ENCODE measurements at regions of chr1 and their contacts with region 1.

Region 1: GRCh38 chr1:156226116-156226538 is 13.3 kb downstream of the PMF1 start:
- DNase-seq: peak; percentile 61
- H3K4me3 Mint-ChIP-seq: no peak overlapping the region
- H3K27ac Mint-ChIP-seq: peak overlapping the region; percentile 91
- H3K4me1 Mint-ChIP-seq: peaks cover 54% of the 10 kb centered on the region
- H3K27me3 Mint-ChIP-seq: no peaks in the 10 kb centered on the region

Region 2: GRCh38 chr1:155976062-155976912 is 249.8 kb before region 1 on chr1:
- CTCF ChIA-PET with region 1: no interaction called
- POLR2A ChIA-PET with region 1: no interaction called
- intact Hi-C with region 1: no loop called
- DNase-seq: peak; percentile 67
- H3K4me3 Mint-ChIP-seq: peak overlapping the region; percentile 96
- H3K27ac Mint-ChIP-seq: peak overlapping the region; percentile 96
- H3K4me1 Mint-ChIP-seq: peaks cover 67% of the 10 kb centered on the region
- H3K27me3 Mint-ChIP-seq: no peaks in the 10 kb centered on the region

Region 3: GRCh38 chr1:156096640-156097391 is 129.3 kb before region 1 on chr1:
- CTCF ChIA-PET with region 1: interaction called, 70 read pairs
- POLR2A ChIA-PET with region 1: interaction called, 29 read pairs
- intact Hi-C with region 1: loop called (anchors 1 kb)
- DNase-seq: peak; percentile 97
- H3K4me3 Mint-ChIP-seq: peak overlapping the region; percentile 64
- H3K27ac Mint-ChIP-seq: peak overlapping the region; percentile 96
- H3K4me1 Mint-ChIP-seq: peaks cover 56% of the 10 kb centered on the region
- H3K27me3 Mint-ChIP-seq: peaks cover 11% of the 10 kb centered on the region

Region 4: DNA sequence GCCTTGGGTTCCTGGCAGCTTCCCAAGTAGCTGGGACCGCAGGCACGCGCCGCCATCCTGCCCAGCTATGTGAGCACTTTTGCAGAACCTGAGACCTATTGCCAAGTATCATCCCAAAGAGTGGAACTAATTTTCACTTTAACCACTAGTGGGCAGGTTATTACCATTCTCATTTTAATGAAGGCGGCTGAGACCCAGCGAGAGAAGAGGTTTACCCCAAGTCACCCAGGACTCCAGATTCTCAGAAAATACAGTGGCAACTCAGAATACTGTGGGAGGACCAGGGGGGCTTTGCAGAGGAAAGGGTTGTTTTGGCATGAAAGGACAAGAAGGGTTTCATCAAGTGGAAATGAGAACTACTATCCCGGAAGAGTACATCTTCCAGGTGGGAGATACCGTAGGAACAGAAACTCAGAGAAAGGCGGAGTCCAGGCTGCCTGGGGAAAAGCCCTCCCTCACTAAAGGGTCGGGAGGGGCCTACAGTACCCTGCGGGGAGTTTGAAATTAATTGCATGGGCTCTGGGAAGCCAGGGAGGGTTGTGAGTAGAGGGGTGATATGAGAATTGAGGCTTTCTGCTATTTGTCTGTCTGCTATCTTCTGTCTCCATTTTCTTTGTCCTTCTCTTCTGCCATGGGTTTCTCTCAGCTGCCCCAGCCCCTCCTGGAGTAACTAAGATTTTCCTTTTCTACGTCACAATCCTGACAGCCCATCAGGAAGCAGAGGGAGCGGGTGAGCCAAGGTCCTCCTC is 79.9 kb before region 1 on chr1:
- CTCF ChIA-PET with region 1: interaction called, 310 read pairs
- POLR2A ChIA-PET with region 1: interaction called, 15 read pairs
- intact Hi-C with region 1: loop called (anchors 1 kb)
- DNase-seq: peak; percentile 64
- H3K4me3 Mint-ChIP-seq: peak overlapping the region; percentile 50
- H3K27ac Mint-ChIP-seq: peak overlapping the region; percentile 81
- H3K4me1 Mint-ChIP-seq: peaks cover 35% of the 10 kb centered on the region
- H3K27me3 Mint-ChIP-seq: no peaks in the 10 kb centered on the region

Region 5: GRCh38 chr1:156198831-156199349 is 27.2 kb before region 1 on chr1:
- CTCF ChIA-PET with region 1: interaction called, 56 read pairs
- POLR2A ChIA-PET with region 1: interaction called, 12 read pairs
- intact Hi-C with region 1: loop called (anchors 1 kb)
- DNase-seq: peak; percentile 73
- H3K4me3 Mint-ChIP-seq: no peak overlapping the region
- H3K27ac Mint-ChIP-seq: no peak overlapping the region
- H3K4me1 Mint-ChIP-seq: peaks cover 64% of the 10 kb centered on the region
- H3K27me3 Mint-ChIP-seq: no peaks in the 10 kb centered on the region

Region 6: DNA sequence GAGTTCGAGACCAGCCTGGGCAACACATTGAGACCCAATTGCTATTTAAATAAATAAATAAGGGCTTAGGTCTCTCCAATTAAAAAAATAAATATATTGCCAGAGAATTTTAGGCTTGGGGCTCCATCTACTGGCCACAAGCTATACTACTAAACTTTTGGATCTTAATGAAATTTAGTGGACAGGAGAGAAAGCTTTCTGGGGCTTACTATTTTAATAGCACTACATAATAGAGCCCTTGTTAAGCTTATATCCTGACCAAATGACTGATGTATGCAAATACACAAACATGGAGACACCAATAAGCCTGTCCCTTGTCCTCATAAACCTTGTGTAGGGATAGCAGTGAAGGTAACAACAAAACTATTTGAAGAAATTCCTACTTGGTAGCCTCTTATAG is 93.5 kb after region 1 on chr1:
- CTCF ChIA-PET with region 1: interaction called, 11 read pairs
- POLR2A ChIA-PET with region 1: no interaction called
- intact Hi-C with region 1: no loop called
- DNase-seq: no peak
- H3K4me3 Mint-ChIP-seq: no peak overlapping the region
- H3K27ac Mint-ChIP-seq: no peak overlapping the region
- H3K4me1 Mint-ChIP-seq: no peaks in the 10 kb centered on the region
- H3K27me3 Mint-ChIP-seq: no peaks in the 10 kb centered on the region

Region 7: DNA sequence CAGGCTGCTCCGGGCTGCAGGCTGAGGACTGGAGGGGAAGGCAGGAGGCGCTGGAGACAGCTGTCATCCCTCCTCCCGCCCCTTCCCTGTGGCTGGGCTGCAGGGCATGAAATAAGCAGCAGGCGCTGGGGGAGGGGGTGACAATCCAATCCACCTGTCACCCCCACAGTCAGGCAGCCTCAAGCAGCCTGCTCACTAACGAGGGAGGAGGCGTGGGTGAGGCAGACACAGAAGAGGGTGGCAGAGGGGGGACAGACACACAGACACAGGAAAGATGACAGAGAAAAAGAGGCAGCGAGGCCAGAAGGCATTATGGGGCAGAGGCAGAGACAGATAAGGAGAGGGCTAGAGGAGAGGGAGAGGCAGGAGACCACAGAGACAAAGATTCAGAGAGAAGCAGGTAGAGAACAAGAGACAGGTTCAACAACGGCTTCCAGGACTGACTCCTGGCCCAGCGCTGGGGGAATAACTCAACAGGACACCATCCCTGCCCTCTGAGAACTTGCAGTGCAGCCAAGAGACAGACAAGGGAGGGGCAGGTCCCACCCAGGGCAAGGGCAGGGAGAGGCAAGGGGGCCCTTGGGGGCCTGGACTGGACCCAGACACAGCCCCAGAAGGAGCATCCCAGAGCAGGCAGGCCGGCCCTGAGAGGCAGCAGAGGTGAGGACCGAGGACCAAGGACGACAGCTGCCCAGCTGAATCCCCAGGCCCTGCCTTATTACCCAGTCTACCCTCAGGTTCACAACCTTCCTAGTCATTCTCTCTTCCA is 263.2 kb after region 1 on chr1:
- CTCF ChIA-PET with region 1: no interaction called
- POLR2A ChIA-PET with region 1: no interaction called
- intact Hi-C with region 1: no loop called
- DNase-seq: peak; percentile 72
- H3K4me3 Mint-ChIP-seq: peak overlapping the region; percentile 56
- H3K27ac Mint-ChIP-seq: peak overlapping the region; percentile 88
- H3K4me1 Mint-ChIP-seq: peaks cover 88% of the 10 kb centered on the region
- H3K27me3 Mint-ChIP-seq: no peaks in the 10 kb centered on the region

Measured in activated CD4-positive, alpha-beta memory T cell treated with anti-CD3 and anti-CD28 coated beads for 36 hours (primary cell).